Activated CD4-positive, alpha-beta T cell treated with anti-CD3 and anti-CD28 coated beads for 36 hours (primary cell): ENCODE measurements at regions of chr1 and their contacts with region 1.

Region 1: GRCh38 chr1:85259118-85259911 is at the start of gene C1orf52:
- DNase-seq: peak; percentile 99
- ATAC-seq: peak; percentile 97
- H3K4me3 Mint-ChIP-seq: peak within 1 kb of the TSS; percentile 95
- H3K27ac Mint-ChIP-seq: peak within 1 kb of the TSS; percentile 94
- H3K4me1 Mint-ChIP-seq: peaks cover 39% of the 10 kb centered on the region
- H3K27me3 Mint-ChIP-seq: no peaks in the 10 kb centered on the region
- total RNA-seq, gene C1orf52: 23.5 to 24.6 TPM

Region 2: GRCh38 chr1:84433258-84434080 is 825.8 kb before region 1 on chr1:
- CTCF ChIA-PET with region 1: no interaction called
- POLR2A ChIA-PET with region 1: no interaction called
- intact Hi-C with region 1: no loop called
- DNase-seq: peak; percentile 65
- ATAC-seq: peak; percentile 76
- H3K4me3 Mint-ChIP-seq: peak overlapping the region; percentile 48
- H3K27ac Mint-ChIP-seq: peak overlapping the region; percentile 32
- H3K4me1 Mint-ChIP-seq: peaks cover 18% of the 10 kb centered on the region
- H3K27me3 Mint-ChIP-seq: no peaks in the 10 kb centered on the region

Region 3: DNA sequence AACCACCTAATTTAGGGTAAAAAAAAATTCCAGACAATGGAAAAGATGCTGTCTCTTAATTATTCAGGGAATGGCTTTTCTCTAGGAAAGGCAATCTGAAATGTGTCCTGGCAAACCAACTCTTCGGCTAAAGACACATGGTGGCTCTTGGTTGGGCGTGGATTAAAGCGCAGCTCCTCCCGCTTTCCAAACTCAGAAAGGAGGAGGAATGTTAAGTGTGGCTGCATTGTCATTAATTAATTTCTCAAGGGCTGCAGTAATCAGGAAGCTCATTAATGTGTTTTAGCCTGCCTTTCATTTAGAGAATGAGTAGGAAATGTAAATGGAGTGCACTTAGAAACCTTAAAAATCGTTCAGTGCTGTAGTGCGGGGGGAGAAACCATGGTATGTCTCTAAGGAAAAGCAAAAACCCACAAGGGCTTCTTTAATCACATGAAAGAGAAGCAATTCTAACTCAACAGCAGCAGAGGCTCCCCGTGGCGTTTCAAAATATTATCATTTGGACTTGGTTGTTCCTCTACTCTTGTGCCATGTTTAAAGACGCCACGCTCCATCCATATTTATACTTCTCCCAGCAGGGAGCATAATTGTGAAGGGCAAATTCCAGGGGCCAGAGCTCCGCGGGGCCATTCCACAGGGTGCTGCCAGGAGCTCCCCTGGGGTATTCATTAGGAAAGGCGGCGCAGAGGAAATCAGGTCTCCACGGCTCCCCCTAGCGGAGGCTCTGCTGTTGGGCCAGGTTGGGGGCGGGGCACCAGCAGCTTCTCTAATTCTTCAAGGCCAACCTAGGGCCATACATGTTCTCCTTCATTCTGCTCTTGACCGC is 477.2 kb before region 1 on chr1:
- CTCF ChIA-PET with region 1: no interaction called
- POLR2A ChIA-PET with region 1: no interaction called
- intact Hi-C with region 1: loop called in 1 of 2 experiments (anchors 5 kb)
- DNase-seq: peak; percentile 89
- ATAC-seq: peak; percentile 89
- H3K4me3 Mint-ChIP-seq: peak overlapping the region; percentile 57
- H3K27ac Mint-ChIP-seq: no peak overlapping the region
- H3K4me1 Mint-ChIP-seq: peaks cover 22% of the 10 kb centered on the region
- H3K27me3 Mint-ChIP-seq: no peaks in the 10 kb centered on the region

Region 4: DNA sequence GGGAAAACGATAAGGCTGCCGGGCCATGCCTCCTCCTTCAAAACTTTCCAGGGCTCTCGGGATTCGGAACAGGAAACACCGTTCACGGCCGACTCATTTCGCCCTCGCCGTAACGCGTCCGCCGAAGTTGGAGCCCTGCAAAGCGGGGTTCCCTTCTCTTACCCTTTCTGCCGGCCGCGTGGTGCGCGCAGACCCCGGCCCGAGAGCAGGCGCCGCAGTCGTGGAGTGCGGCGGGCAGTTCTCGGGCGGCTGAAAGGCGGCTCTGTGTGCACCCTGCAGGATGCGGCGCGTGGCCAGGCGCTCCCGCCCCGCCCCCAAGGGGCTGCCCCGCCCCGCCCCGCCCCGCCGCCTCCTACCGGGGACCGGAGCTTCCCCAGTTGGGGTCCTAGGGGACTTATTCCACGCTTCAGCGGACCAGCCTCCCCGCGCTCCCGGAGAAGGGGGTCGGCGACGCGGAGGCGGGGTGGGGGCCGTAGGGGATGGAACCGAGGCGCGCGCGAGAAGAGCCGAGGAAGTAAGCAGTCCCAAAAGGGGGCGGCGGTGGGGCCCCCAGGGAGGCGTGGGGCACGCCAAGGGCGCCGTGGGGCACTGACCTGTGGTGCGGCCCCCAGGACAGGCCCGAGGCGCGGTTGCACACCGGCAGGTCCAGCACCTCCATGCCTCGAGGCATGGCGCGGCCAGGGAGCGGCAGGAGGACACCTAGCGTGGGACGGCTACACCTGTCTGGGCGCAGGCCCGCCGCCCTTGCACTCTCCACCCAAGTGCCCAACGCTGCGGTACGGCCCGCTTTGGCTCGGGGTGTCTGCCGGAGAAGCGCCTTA is 262.3 kb before region 1 on chr1 and contains the start of gene MCOLN2:
- CTCF ChIA-PET with region 1: interaction called, 3 read pairs
- POLR2A ChIA-PET with region 1: interaction called, 3 read pairs
- intact Hi-C with region 1: loop called in 1 of 2 experiments (anchors 5 kb)
- DNase-seq: peak; percentile 75
- ATAC-seq: peak; percentile 54
- H3K4me3 Mint-ChIP-seq: peak within 1 kb of the TSS; percentile 80
- H3K27ac Mint-ChIP-seq: peak within 1 kb of the TSS; percentile 81
- H3K4me1 Mint-ChIP-seq: peaks cover 45% of the 10 kb centered on the region
- H3K27me3 Mint-ChIP-seq: peaks cover 22% of the 10 kb centered on the region
- total RNA-seq, gene MCOLN2: 32.9 to 43.5 TPM

Region 5: GRCh38 chr1:85109475-85109874 is 149.8 kb before region 1 on chr1:
- CTCF ChIA-PET with region 1: interaction called, 31 read pairs
- POLR2A ChIA-PET with region 1: no interaction called
- intact Hi-C with region 1: loop called (anchors 1 to 2 kb)
- DNase-seq: peak; percentile 58
- ATAC-seq: peak; percentile 78
- H3K4me3 Mint-ChIP-seq: no peak overlapping the region
- H3K27ac Mint-ChIP-seq: no peak overlapping the region
- H3K4me1 Mint-ChIP-seq: no peaks in the 10 kb centered on the region
- H3K27me3 Mint-ChIP-seq: peaks cover 5% of the 10 kb centered on the region

Region 6: GRCh38 chr1:85240174-85240601 is 19.1 kb before region 1 on chr1:
- CTCF ChIA-PET with region 1: interaction called, 17 read pairs
- POLR2A ChIA-PET with region 1: no interaction called
- intact Hi-C with region 1: no loop called
- DNase-seq: peak; percentile 48
- ATAC-seq: peak; percentile 81
- H3K4me3 Mint-ChIP-seq: no peak overlapping the region
- H3K27ac Mint-ChIP-seq: no peak overlapping the region
- H3K4me1 Mint-ChIP-seq: peaks cover 7% of the 10 kb centered on the region
- H3K27me3 Mint-ChIP-seq: peaks cover 3% of the 10 kb centered on the region